ENCODE measurements at regions of chr17 and their contacts with region 1.

Region 1: DNA sequence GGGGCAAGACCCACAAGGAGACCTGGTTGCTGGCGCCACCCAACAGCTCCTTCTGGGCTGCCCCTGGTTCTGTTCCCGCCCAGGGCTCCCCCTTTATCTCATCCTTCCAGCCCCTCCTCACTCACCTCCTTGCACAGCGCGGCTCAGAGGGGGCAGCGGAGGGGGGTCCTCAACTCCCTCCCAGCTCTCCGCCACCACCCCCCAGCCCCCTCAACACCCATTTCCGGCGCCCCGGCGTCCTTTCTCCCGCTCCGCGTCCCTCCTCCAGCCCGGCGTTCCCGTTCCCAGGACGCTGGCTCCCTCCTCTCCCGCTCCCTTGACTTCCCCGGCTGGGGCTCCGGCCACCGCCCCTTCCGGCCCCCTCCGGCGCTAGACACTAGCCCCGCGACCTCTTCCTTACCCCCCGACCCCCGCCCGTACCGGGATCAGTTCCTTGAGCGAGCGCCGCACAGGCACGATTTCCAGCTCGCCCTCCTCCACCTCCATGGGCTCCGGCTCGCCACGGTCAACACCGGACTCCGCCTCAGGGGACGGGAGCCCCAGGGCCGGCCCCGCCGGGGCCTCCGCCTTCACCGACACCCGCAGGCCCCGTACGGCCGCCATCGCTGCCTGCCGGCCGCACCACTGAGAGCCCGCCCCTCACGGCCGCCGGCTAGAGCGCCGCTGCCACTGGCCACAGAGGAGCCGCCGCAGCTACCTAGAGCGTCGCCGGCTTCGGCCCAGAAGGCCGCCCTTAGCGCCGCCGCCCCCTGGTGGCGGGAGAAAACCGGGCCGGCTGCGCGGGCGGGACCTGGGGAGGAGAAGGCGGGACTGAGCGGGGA is at the start of gene NCBP3:
- DNase-seq: peak; percentile 76
- H3K4me3 ChIP-seq: peak within 1 kb of the TSS; percentile 81
- H3K27ac ChIP-seq: peak within 1 kb of the TSS; percentile 68
- H3K27me3 ChIP-seq: peaks cover 5% of the 10 kb centered on the region
- CTCF ChIP-seq: peak; percentile 84
- polyA plus RNA-seq, gene NCBP3: 19.4 and 28.5 TPM in 2 replicates

Region 2: DNA sequence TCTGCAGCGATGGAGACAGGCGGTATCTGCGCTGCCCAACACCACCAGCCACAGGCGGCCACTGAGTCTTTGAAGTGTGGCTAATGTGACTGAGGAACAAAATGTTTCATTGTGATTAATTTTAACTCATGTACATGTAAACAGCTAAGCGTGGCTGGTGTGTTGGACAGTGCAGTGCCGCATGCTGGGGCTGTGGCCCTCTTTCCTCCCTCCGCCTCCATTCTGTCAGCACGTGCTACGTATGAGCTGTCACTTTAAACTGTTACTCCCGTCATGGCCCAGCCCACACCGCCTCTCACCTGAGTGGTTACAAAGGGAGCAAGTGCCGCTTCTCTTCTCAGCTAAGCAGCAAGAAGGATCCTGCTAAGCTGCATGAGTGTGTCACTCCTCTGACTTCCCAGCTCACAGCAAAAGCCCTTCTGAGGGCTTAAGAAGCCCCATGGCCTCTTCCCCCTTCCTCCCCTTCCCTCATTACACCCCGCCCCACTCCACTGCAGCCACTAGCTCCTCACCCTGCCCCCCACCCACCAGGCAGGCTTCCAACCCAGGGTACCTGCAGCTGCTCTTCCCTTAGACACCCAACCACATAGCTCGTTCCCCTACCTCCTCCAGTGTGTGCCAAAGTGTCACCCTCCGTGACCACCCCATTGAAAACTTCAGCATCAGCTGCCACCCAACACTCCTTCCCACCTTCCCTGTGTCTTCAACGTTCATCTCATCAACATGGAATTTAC is 107.1 kb before region 1 on chr17:
- CTCF ChIA-PET with region 1: interaction called, 109 read pairs
- POLR2A ChIA-PET with region 1: interaction called, 11 read pairs
- DNase-seq: no peak
- H3K4me3 ChIP-seq: no peak overlapping the region
- H3K27ac ChIP-seq: no peak overlapping the region
- H3K27me3 ChIP-seq: no peaks in the 10 kb centered on the region
- CTCF ChIP-seq: no peak

Region 3: DNA sequence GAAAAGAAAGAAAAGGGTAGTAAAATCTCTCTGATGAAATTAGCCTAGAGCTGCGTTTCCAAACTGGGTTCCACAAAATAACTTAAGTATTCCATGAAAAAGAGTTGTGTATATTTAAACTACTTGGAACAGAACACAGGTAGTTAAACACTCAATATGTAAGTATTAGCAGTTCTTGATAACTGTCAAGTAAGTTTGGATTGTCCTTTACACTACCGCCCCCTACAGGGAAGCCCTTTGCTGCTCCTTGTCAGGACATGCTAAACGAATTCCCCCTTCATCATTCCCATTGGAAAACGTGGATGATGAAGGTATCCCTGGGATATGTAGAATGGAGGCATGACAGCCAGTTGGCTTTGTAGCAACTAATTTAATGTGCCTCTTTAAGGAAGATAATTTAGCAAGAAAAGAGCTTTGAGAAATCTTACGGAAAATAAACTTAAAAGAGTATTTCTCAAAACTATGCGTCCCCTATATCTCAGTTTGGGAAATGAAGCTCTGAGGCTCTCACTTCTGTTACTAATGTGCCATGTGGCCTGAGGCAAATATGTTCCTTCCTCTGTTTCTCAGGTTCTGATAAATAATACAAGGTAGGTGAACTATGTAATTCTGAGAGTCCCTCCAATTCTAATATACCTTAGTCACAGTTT is 18.6 kb before region 1 on chr17:
- CTCF ChIA-PET with region 1: interaction called, 74 read pairs
- POLR2A ChIA-PET with region 1: interaction called, 3 read pairs
- DNase-seq: no peak
- H3K4me3 ChIP-seq: no peak overlapping the region
- H3K27ac ChIP-seq: no peak overlapping the region
- H3K27me3 ChIP-seq: no peaks in the 10 kb centered on the region
- CTCF ChIP-seq: peak; percentile 68

Region 4: DNA sequence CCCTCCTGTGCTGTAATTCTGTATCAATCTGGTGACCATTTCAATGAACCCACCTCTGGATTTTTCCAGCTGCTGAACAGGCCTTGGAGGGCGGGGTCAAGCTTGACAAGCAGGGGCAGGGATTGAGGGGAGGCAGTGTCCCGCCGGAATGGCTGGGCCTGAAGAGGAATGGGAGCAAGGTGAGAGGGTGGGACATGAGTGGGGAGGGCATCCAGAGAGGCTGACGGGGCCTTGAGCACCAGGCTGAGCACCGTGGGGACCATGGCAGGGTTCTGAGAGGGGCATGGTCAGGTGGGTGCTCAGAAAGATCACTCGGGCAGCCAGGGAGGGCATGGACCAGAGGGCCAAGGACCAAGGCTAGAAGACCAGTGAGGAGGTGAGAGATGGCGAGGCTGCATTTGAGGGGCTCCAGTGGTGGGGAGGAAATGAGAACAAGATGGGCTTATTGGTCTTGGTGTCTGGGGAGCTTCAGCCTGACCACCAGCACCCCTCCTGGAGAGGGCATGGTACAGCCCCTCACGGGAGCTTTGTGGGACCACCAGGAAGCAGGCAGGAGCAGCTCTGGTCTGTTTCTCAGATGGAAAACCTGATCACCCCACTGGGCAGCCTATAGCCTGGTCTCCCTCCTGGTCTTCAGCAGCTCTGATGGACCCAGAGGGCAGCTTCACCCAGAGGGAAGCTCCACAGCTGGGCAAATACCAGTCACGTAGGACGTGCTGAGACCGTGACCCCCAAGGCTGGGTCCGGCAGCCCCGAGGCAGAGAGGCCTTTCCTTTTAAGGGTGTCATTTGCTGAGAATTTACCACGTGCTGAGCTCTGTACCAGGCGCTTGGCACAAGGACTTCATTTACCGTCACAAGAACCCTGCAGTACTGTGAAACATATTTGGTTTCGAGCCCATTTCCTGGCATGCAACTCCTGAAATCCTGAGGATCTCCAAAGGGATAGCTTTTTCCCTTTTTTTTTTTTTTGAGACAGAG is 11.6 kb after region 1 on chr17:
- CTCF ChIA-PET with region 1: interaction called, 51 read pairs
- POLR2A ChIA-PET with region 1: no interaction called
- DNase-seq: no peak
- H3K4me3 ChIP-seq: no peak overlapping the region
- H3K27ac ChIP-seq: no peak overlapping the region
- H3K27me3 ChIP-seq: no peaks in the 10 kb centered on the region
- CTCF ChIP-seq: no peak

Region 5: GRCh38 chr17:3879186-3879585 is 33.4 kb after region 1 on chr17:
- CTCF ChIA-PET with region 1: interaction called, 13 read pairs
- POLR2A ChIA-PET with region 1: no interaction called
- DNase-seq: no peak
- H3K4me3 ChIP-seq: no peak overlapping the region
- H3K27ac ChIP-seq: no peak overlapping the region
- H3K27me3 ChIP-seq: no peaks in the 10 kb centered on the region
- CTCF ChIP-seq: no peak